BJ (cell line): ENCODE measurements at regions of chr7 and their contacts with region 1.

Region 1: DNA sequence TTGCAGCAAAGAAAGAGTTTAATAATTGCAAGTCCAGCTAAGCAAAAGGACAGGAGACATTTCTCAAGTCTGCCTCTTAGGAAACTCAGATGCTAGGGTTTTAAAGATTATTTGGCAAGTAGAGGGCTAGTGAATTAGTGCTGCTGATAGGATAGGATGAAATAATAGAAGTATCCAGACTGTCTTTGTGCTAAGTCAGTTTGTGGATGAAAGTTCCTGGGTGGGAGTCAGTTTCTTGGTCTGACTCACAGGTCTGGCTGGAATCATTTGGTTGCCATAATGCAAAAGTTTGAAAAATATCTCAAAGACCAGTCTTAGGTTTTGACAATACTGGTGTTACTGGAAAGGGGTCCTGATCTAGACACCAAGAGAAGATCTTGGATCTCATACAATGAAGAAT is 42.6 kb upstream of the INHBA start:
- DNase-seq: no peak
- H3K4me3 ChIP-seq: no peak overlapping the region
- H3K27me3 ChIP-seq: no peaks in the 10 kb centered on the region
- CTCF ChIP-seq: no peak

Region 2: DNA sequence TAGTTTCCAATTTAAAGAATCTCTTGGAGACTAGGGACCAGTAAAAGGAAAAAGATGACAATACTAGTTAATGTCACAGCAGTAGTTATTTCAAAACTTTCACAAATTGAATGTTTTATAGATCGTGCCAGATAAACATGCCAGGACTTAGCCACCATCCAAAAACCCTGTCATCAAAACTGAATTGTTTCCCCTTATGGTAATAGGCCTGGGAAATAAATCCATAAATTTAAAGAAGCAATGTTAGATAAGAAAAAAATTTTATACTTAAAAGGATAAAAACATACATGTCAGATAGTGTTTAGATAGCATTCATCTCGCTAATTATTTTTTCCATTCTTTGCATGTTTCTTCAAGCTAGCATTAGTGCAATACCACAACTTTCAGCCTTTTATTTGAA is 1539.5 kb before region 1 on chr7:
- CTCF ChIA-PET with region 1: no interaction called
- POLR2A ChIA-PET with region 1: interaction called, 13 read pairs
- DNase-seq: no peak
- H3K4me3 ChIP-seq: no peak overlapping the region
- H3K27me3 ChIP-seq: no peaks in the 10 kb centered on the region
- CTCF ChIP-seq: no peak

Region 3: GRCh38 chr7:41760293-41760692 is 14.8 kb after region 1 on chr7:
- CTCF ChIA-PET with region 1: no interaction called
- POLR2A ChIA-PET with region 1: no interaction called
- DNase-seq: no peak
- H3K4me3 ChIP-seq: no peak overlapping the region
- H3K27me3 ChIP-seq: no peaks in the 10 kb centered on the region
- CTCF ChIP-seq: no peak

Region 4: DNA sequence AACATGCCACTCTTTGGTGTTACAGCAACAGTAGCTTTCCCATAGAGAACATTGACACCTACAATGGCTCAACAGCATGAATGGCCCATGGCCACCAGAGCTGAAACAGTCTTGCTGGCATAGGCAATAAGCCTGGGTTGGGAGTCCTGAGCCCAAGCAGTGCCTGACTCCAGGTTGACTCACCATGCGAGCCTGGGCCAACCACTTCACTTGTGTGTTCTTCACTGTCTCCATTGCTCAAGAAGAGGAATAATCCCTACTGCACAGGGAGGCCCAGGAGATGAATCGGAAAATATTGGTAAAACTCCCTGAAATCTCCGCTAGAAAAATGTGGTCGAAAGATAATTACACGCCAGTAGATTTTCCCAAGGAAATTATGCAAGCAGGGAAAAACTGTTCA is 46.7 kb after region 1 on chr7:
- CTCF ChIA-PET with region 1: no interaction called
- POLR2A ChIA-PET with region 1: no interaction called
- DNase-seq: no peak
- H3K4me3 ChIP-seq: no peak overlapping the region
- H3K27me3 ChIP-seq: no peaks in the 10 kb centered on the region
- CTCF ChIP-seq: no peak

Region 5: GRCh38 chr7:41861642-41862041 is 116.2 kb after region 1 on chr7:
- CTCF ChIA-PET with region 1: no interaction called
- POLR2A ChIA-PET with region 1: no interaction called
- DNase-seq: no peak
- H3K4me3 ChIP-seq: no peak overlapping the region
- H3K27me3 ChIP-seq: no peaks in the 10 kb centered on the region
- CTCF ChIP-seq: no peak